Activated CD4-positive, alpha-beta T cell treated with anti-CD3 and anti-CD28 coated beads for 36 hours (primary cell): ENCODE measurements at regions of chr6 and their contacts with region 1.

Region 1: DNA sequence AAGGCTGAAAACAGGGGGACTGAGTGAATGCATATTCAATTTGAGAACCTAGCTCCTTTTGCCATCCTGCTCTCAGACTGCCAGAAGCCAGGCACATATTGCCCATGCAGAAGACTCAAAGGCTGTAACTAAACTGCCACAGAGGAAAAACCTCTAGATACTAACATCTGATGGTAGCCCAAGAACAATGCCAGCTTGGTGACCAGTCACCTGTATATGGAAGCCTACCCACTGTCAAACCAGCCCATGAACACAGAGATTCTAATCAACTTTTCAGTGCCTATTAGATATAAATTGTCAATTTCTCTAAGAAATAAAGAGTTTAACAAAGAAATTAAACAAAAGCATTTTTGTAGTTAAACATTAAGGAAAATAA is 34.2 kb downstream of the GPR63 start:
- DNase-seq: no peak
- ATAC-seq: no peak
- H3K4me3 Mint-ChIP-seq: no peak overlapping the region
- H3K27ac Mint-ChIP-seq: no peak overlapping the region
- H3K4me1 Mint-ChIP-seq: no peaks in the 10 kb centered on the region
- H3K27me3 Mint-ChIP-seq: no peaks in the 10 kb centered on the region

Region 2: GRCh38 chr6:96853083-96853482 is 50.0 kb after region 1 on chr6:
- CTCF ChIA-PET with region 1: no interaction called
- POLR2A ChIA-PET with region 1: interaction called, 11 read pairs
- intact Hi-C with region 1: no loop called
- DNase-seq: no peak
- ATAC-seq: no peak
- H3K4me3 Mint-ChIP-seq: no peak overlapping the region
- H3K27ac Mint-ChIP-seq: no peak overlapping the region
- H3K4me1 Mint-ChIP-seq: no peaks in the 10 kb centered on the region
- H3K27me3 Mint-ChIP-seq: peaks cover 2% of the 10 kb centered on the region

Region 3: GRCh38 chr6:96934087-96934486 is 131.0 kb after region 1 on chr6:
- CTCF ChIA-PET with region 1: no interaction called
- POLR2A ChIA-PET with region 1: no interaction called
- intact Hi-C with region 1: no loop called
- DNase-seq: no peak
- ATAC-seq: no peak
- H3K4me3 Mint-ChIP-seq: no peak overlapping the region
- H3K27ac Mint-ChIP-seq: no peak overlapping the region
- H3K4me1 Mint-ChIP-seq: peaks cover 4% of the 10 kb centered on the region
- H3K27me3 Mint-ChIP-seq: no peaks in the 10 kb centered on the region